Activated T-helper 1 cell treated with anti-CD3 and anti-CD28 coated beads, Interleukin-12 subunit alpha, Interleukin-12 subunit beta, Interleukin-2, Interleukin-4 antibody, amounts not matched to agents 30 ng/mL and 10 ng/mL and 1 ng/mL, durations not matched to agents 14 hours and 24 hours and 36 hours (primary cell): ENCODE measurements at regions of chr15 and their contacts with region 1.

Region 1: GRCh38 chr15:74781431-74782258 is at the start of gene CSK:
- DNase-seq: peak; percentile 78
- H3K4me3 Mint-ChIP-seq: peak within 1 kb of the TSS; percentile 96
- H3K27ac Mint-ChIP-seq: peak within 1 kb of the TSS; percentile 100
- H3K4me1 Mint-ChIP-seq: peaks cover 62% of the 10 kb centered on the region
- H3K27me3 Mint-ChIP-seq: no peaks in the 10 kb centered on the region
- total RNA-seq, gene CSK: 348 and 362 TPM in 2 replicates

Region 2: DNA sequence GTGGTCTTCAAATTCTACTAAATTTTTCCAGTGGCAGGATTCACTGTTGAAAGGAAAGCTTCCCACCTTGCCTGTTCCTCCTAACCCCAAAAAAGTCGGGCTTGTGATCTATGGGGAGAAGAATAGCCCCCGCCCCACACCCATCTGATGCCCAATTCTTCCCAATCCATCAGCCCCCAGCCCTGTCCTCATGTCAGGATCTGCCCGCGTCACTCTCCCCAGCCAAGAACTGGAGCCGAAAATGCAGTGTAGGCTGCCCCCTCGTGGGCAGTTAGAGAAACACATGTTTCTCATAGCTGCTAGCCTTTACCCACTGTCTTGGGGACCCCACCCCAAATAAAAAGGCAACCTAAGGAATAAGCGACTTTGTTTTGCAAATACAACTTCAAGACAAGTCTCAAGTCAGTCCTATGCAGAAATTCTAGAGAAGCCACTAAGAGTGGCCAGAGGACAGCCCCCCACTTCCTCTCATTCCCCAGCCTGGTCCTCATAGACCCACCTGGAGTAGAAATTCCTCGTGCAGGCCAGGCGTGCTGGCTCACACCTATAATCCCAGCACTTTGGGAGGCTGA is 12.8 kb before region 1 on chr15:
- intact Hi-C with region 1: loop called (anchors 1 kb)
- DNase-seq: no peak
- H3K4me3 Mint-ChIP-seq: no peak overlapping the region
- H3K27ac Mint-ChIP-seq: no peak overlapping the region
- H3K4me1 Mint-ChIP-seq: peaks cover 34% of the 10 kb centered on the region
- H3K27me3 Mint-ChIP-seq: peaks cover 11% of the 10 kb centered on the region

Region 3: GRCh38 chr15:74873036-74873755 is 91.6 kb after region 1 on chr15 and contains the start of gene SCAMP2:
- intact Hi-C with region 1: loop called (anchors 1 kb)
- DNase-seq: peak; percentile 86
- H3K4me3 Mint-ChIP-seq: peak within 1 kb of the TSS; percentile 97
- H3K27ac Mint-ChIP-seq: peak within 1 kb of the TSS; percentile 86
- H3K4me1 Mint-ChIP-seq: peaks cover 34% of the 10 kb centered on the region
- H3K27me3 Mint-ChIP-seq: peaks cover 4% of the 10 kb centered on the region
- total RNA-seq, gene SCAMP2: 93.7 and 103 TPM in 2 replicates

Region 4: DNA sequence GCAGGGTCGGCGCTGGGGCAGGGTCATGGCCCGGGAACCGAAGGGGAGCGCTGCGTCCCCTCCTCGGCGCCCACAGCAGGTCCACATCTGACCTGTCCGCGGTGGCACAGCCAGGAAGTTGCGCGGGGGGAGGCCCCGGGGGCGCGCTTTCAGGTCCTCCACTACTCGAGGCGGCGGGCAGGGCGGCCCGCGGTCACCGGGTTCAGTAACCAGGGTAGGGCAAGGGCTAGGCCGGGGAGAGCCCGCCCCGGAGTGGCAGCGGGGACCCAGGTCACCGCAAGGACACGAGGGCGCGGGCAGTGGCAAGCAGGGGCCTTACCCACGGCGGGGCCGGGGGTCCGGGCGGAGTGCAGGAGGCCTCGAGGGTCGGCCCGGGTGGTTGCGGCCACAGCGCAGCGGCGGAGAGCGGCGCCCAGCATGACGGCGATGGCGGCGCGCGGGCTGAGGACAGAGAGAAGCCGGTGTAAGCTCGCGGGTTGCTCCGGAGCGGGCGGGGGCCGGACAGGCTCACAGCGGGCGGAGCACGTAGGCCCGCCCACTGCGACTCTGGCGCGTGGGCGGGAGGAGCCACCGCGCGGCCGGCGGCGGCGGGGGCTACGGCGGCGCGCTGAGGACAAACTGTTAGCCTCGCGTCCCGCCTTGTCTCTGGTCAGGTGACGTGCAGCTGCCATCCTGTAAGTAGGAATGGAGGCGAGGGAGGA is 156.1 kb after region 1 on chr15 and contains the start of gene COX5A:
- intact Hi-C with region 1: loop called (anchors 1 kb)
- DNase-seq: peak; percentile 91
- H3K4me3 Mint-ChIP-seq: peak within 1 kb of the TSS; percentile 91
- H3K27ac Mint-ChIP-seq: peak within 1 kb of the TSS; percentile 91
- H3K4me1 Mint-ChIP-seq: peaks cover 22% of the 10 kb centered on the region
- H3K27me3 Mint-ChIP-seq: no peaks in the 10 kb centered on the region
- total RNA-seq, gene COX5A: 273 and 290 TPM in 2 replicates

Region 5: GRCh38 chr15:75625542-75626347 is 844.1 kb after region 1 on chr15 and contains the start of gene SNUPN:
- intact Hi-C with region 1: loop called (anchors 10 kb)
- DNase-seq: peak; percentile 90
- H3K4me3 Mint-ChIP-seq: peak within 1 kb of the TSS; percentile 94
- H3K27ac Mint-ChIP-seq: peak within 1 kb of the TSS; percentile 100
- H3K4me1 Mint-ChIP-seq: peaks cover 38% of the 10 kb centered on the region
- H3K27me3 Mint-ChIP-seq: no peaks in the 10 kb centered on the region
- total RNA-seq, gene SNUPN: 30.8 and 34.1 TPM in 2 replicates